SK-N-SH (cell line): ENCODE measurements at regions of chr4 and their contacts with region 1.

Region 1: DNA sequence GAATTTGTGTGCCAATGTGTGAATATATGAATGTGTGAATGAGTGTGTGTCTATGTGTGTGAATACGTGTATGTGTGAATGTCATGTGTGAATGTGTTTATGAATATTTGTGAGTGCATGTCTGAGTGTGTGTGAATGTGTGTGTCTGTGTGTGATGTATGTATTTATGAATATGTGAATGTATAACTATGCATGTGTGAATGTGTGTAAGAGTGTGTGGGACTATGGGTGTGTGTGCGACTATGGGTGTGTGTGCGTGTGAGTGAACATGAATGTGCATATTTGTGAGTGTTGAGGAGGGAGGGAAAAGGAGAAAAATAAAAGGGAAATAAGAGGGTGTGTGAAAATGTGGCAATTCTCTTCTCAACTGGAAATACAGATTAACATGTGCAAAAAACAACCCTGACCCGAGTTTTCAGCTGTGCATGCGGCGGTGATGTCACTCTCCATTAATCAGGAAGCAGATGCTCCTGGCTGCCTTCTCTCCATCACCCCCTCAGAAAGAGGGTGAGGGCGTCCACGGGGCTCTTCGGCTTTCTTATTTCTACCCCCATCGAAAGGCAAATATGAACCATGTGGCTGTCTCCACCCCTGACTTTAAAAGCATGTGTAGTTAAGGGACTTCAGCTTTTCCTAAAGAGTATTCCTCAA is 219.8 kb downstream of the MAML3 start:
- DNase-seq: peak; percentile 68
- H3K4me3 ChIP-seq: no peak overlapping the region
- H3K27ac ChIP-seq: peak overlapping the region; percentile 41 to 71; a peak in 3 of 4 replicates
- H3K4me1 ChIP-seq: peaks cover 5 to 59% of the 10 kb centered on the region in 2 experiments
- H3K27me3 ChIP-seq: no peaks in the 10 kb centered on the region
- CTCF ChIP-seq: no peak
- EP300 ChIP-seq: 0 out of 4 replicates have a peak, but pooled peaks of 1 of the 2 experiments have one; percentile 28
- RAD21 ChIP-seq: peak; percentile 24

Region 2: GRCh38 chr4:139908636-139909437 is 25.3 kb before region 1 on chr4:
- CTCF ChIA-PET with region 1: no interaction called
- POLR2A ChIA-PET with region 1: no interaction called
- DNase-seq: no peak
- H3K4me3 ChIP-seq: no peak overlapping the region
- H3K27ac ChIP-seq: peak overlapping the region in 1 of 2 experiments; percentile 85; a peak in 2 of 4 replicates
- H3K4me1 ChIP-seq: peaks cover 5 to 40% of the 10 kb centered on the region in 2 experiments; a peak in 3 of 4 replicates
- H3K27me3 ChIP-seq: no peaks in the 10 kb centered on the region
- CTCF ChIP-seq: no peak
- EP300 ChIP-seq: no peak
- RAD21 ChIP-seq: no peak

Region 3: DNA sequence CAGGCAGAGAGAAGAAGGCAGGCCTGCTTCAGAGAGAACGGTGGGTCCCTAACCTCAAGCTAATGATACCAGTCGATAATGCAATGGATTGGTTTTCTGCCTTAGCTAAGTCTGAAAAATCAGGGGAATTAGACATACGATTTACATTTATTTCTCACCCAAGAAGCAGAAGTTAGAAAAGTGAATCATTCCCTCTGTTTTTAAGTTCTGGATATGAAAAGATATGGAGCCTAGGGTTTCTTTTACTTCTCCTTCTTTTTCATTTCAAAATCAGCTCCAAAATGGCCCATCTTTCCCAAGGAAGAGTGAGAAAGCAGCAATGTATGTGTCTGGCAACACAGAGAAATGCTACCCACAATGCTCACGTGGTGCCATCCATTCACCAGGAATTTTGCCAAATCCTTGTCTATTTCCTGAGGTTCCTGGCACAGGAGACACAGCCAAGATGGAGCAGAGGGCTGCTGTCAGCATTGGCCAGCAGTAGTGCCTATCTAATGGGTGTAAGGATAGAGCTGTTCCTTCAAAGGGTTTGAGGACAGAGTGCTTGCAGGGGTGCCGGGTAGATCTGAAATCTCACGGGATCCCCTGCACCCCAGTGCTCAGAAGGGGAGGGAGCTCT is 11.7 kb before region 1 on chr4:
- CTCF ChIA-PET with region 1: interaction called, 11 read pairs
- POLR2A ChIA-PET with region 1: interaction called, 8 read pairs
- DNase-seq: no peak
- H3K4me3 ChIP-seq: no peak overlapping the region; a peak in 1 of 4 replicates
- H3K27ac ChIP-seq: peak overlapping the region; percentile 78 to 90
- H3K4me1 ChIP-seq: peaks cover 38 to 51% of the 10 kb centered on the region in 2 experiments
- H3K27me3 ChIP-seq: no peaks in the 10 kb centered on the region
- CTCF ChIP-seq: no peak
- EP300 ChIP-seq: no peak; a peak in 1 of 4 replicates
- RAD21 ChIP-seq: no peak